GM23248 (cell line): ENCODE measurements at regions of chr12 and their contacts with region 1.

Region 1: DNA sequence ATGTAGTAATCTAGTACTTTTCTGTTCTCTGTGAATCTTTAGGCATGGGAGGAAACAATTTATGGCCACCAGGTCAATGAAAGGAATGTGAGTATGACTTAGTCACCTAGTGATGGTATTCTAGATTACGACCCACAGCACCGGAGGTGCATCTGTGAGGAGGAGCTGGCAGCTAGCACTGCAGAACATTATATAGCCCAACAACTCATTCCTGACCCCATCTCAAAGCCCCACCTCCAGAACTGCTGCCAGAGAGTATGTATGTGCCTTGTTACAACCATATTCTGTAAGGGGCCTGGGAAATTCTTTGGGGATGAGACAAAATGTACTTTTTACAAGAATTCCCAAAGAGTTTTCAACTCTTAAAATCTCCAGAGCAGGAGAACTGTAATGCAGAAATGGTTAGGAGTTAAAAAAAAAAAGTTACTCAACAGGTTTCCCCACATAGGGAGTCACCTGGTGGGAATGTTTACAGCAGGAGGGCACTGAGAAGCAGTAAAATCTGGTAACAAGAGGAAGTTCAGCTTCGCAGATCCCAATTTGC is 34.9 kb upstream of the CERS5 start:
- DNase-seq: peak; percentile 87
- H3K4me3 ChIP-seq: peak overlapping the region; percentile 24
- H3K27ac ChIP-seq: peak overlapping the region; percentile 86
- H3K4me1 ChIP-seq: peaks cover 65% of the 10 kb centered on the region
- H3K27me3 ChIP-seq: no peaks in the 10 kb centered on the region

Region 2: GRCh38 chr12:49716553-49716952 is 485.5 kb before region 1 on chr12:
- in situ Hi-C with region 1: no loop called
- DNase-seq: no peak
- H3K4me3 ChIP-seq: no peak overlapping the region
- H3K27ac ChIP-seq: no peak overlapping the region
- H3K4me1 ChIP-seq: no peaks in the 10 kb centered on the region
- H3K27me3 ChIP-seq: peaks cover 4% of the 10 kb centered on the region; the same call in 1 of the 2 replicates

Region 3: DNA sequence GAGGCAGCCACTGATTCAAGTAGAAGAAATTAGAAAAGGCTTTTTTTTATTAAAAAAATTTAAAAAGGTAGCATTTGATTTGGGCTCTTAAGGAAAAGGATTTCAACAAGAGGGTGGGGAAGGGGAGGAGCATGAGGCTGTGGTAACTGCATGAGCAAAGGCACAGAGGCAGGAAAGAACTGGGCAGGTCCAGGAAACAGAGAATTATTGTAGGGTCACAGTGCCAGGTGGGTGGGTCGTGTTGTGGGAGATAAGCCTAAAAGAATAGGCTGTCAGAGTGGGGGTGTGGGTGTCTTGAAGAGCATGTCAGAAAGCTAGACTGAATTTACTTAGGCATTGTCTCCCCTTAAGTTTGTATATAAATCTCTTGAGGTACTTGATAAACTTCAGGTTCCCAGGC is 73.5 kb after region 1 on chr12:
- in situ Hi-C with region 1: no loop called
- DNase-seq: no peak
- H3K4me3 ChIP-seq: no peak overlapping the region
- H3K27ac ChIP-seq: no peak overlapping the region
- H3K4me1 ChIP-seq: peaks cover 12% of the 10 kb centered on the region
- H3K27me3 ChIP-seq: no peaks in the 10 kb centered on the region

Region 4: GRCh38 chr12:50314629-50315312 is 112.7 kb after region 1 on chr12:
- in situ Hi-C with region 1: loop called (anchors 10 kb)
- DNase-seq: peak; percentile 62
- H3K4me3 ChIP-seq: no peak overlapping the region
- H3K27ac ChIP-seq: no peak overlapping the region
- H3K4me1 ChIP-seq: peaks cover 10% of the 10 kb centered on the region
- H3K27me3 ChIP-seq: no peaks in the 10 kb centered on the region